ENCODE measurements at regions of chr2 and their contacts with region 1.

Region 1: GRCh38 chr2:11790228-11790627 is 43.8 kb downstream of the LPIN1 start:
- DNase-seq: no peak
- H3K4me3 Mint-ChIP-seq: no peak overlapping the region
- H3K27ac Mint-ChIP-seq: no peak overlapping the region
- H3K4me1 Mint-ChIP-seq: peaks cover 2% of the 10 kb centered on the region
- H3K27me3 Mint-ChIP-seq: no peaks in the 10 kb centered on the region

Region 2: GRCh38 chr2:11534744-11535484 is 255.3 kb before region 1 on chr2:
- CTCF ChIA-PET with region 1: no interaction called
- intact Hi-C with region 1: no loop called
- DNase-seq: peak; percentile 12
- H3K4me3 Mint-ChIP-seq: no peak overlapping the region
- H3K27ac Mint-ChIP-seq: no peak overlapping the region
- H3K4me1 Mint-ChIP-seq: no peaks in the 10 kb centered on the region
- H3K27me3 Mint-ChIP-seq: peaks cover 22% of the 10 kb centered on the region

Region 3: GRCh38 chr2:11802782-11803191 is 12.6 kb after region 1 on chr2:
- CTCF ChIA-PET with region 1: no interaction called
- intact Hi-C with region 1: loop called (anchors 2 kb)
- DNase-seq: no peak
- H3K4me3 Mint-ChIP-seq: no peak overlapping the region
- H3K27ac Mint-ChIP-seq: no peak overlapping the region
- H3K4me1 Mint-ChIP-seq: peaks cover 2% of the 10 kb centered on the region
- H3K27me3 Mint-ChIP-seq: no peaks in the 10 kb centered on the region

Measured in activated naive CD4-positive, alpha-beta T cell treated with anti-CD3 and anti-CD28 coated beads for 36 hours (primary cell).